H1 (cell line): ENCODE measurements at regions of chr1 and their contacts with region 1.

Region 1: GRCh38 chr1:193059268-193060225 is at the starts of genes RO60 and UCHL5:
- DNase-seq: peak; percentile 93 to 94
- H3K4me3 ChIP-seq: peak within 1 kb of the TSS; percentile 94 to 96 (median 94)
- H3K27ac ChIP-seq: peak within 1 kb of the TSS; percentile 92
- H3K4me1 ChIP-seq: peaks cover 0 to 5% (median 3%) of the 10 kb centered on the region in 4 experiments; a peak in 3 of 7 replicates
- H3K27me3 ChIP-seq: no peaks in the 10 kb centered on the region
- CTCF ChIP-seq: no peak
- EP300 ChIP-seq: peak; percentile 8 to 84; a peak in 2 of 3 replicates
- POLR2A ChIP-seq: peak; percentile 59 to 90
- RAD21 ChIP-seq: peak; percentile 0 to 12; a peak in 2 of 4 replicates
- total RNA-seq, gene RO60: 88.0 and 103 TPM in 2 replicates
- total RNA-seq, gene UCHL5: 34.4 and 40.0 TPM in 2 replicates

Region 2: GRCh38 chr1:193069748-193070385 is 10.3 kb after region 1 on chr1:
- CTCF ChIA-PET with region 1: interaction called, 11 read pairs
- POLR2A ChIA-PET with region 1: interaction called, 6 read pairs
- DNase-seq: no peak
- H3K4me3 ChIP-seq: no peak overlapping the region
- H3K27ac ChIP-seq: no peak overlapping the region
- H3K4me1 ChIP-seq: peaks cover 0 to 4% (median 1%) of the 10 kb centered on the region in 4 experiments; a peak in 2 of 7 replicates
- H3K27me3 ChIP-seq: no peaks in the 10 kb centered on the region
- CTCF ChIP-seq: peak; percentile 40 to 70 (median 41); a peak in 3 of 4 replicates
- EP300 ChIP-seq: no peak
- POLR2A ChIP-seq: no peak
- RAD21 ChIP-seq: peak; percentile 45 to 57; a peak in 3 of 4 replicates